Body of pancreas (tissue), 4 donors: ENCODE measurements at regions of chr16 and their contacts with region 1.

Region 1: DNA sequence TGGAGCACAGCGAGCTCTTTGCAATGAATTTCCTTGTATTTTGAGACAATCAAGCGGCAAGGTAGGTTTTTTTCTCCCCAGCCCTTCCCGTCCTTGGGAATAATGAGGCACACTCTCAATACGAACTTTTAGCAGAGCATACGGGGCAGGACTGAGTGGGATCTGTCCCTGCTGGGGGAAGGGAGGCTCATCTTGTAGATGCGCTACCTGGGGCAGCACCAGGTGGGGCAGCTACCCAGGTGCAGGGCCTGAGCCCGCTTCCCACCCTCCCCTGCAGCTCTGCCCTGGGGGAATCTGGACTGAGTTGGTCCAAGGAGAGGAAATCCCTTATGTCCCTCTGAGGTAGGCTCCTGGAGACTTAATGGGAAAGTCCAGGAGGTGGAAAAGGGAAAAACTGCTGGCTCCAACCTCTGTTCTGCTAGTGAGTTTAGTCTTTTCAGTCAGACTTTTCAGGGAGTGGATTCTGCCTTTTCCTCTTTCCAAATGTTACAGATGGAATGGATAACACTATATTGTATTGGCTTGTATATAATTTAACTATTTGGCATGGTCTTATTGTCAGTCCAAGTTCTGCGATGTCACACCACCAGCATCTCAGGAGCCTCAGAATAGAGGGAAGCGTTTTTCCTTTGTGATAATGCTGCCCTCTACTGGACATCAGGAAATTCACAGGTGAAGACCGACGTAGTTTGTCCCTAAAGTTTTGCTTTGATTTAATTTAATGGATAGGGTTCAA is 9.6 kb upstream of the CES1 start:
- DNase-seq: peak; percentile 23 to 35 (median 28)
- ATAC-seq: peak; percentile 38
- H3K4me3 ChIP-seq: no peak overlapping the region
- H3K27ac ChIP-seq: no peak overlapping the region
- H3K4me1 ChIP-seq: no peaks in the 10 kb centered on the region
- H3K27me3 ChIP-seq: no peaks in the 10 kb centered on the region
- CTCF ChIP-seq: peak; percentile 60 to 84 (median 80)
- POLR2A ChIP-seq: no peak

Region 2: GRCh38 chr16:55711959-55712876 is 130.3 kb before region 1 on chr16:
- intact Hi-C with region 1: loop called (anchors 5 kb)
- DNase-seq: peak; percentile 73 to 83 (median 75)
- ATAC-seq: peak; percentile 56
- H3K4me3 ChIP-seq: no peak overlapping the region
- H3K27ac ChIP-seq: no peak overlapping the region
- H3K4me1 ChIP-seq: no peaks in the 10 kb centered on the region
- H3K27me3 ChIP-seq: no peaks in the 10 kb centered on the region
- CTCF ChIP-seq: peak; percentile 46 to 67 (median 64)
- POLR2A ChIP-seq: no peak